Esophagus muscularis mucosa (tissue), 4 donors: ENCODE measurements at regions of chr22 and their contacts with region 1.

Region 1: DNA sequence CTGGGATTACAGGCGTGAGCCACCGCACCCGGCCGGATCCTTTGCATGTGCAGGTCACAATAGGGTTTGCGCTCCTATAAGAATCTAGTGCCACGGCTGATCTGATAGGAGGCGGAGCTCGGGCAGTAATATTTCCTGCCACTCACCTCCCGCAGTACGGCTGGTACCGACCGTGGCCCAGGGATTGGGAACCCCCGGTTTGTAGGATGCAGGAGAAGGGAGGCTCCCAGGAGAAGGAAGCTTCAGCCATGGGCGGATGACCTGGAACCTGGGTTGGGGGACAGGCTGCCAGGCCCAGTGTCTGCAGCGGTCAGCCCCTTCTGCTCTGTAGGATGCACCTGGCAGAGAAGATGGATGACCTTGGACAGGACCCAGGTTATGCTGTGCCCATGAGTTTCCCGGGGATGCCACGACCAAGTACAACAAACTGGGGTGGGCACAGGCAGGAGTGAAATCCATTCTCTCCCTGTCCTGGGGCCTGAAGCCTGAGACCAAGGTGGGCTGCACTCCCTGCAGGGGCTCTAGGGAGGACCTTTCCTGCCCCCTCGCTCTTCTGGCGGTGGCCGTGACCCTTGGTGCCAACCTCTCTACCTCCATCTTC is 818.9 kb downstream of the BRD1 start:
- DNase-seq: peak; percentile 89
- H3K4me3 ChIP-seq: no peak overlapping the region
- H3K27ac ChIP-seq: no peak overlapping the region
- H3K4me1 ChIP-seq: peaks cover 0 to 10% (median 3%) of the 10 kb centered on the region in 4 donors
- H3K27me3 ChIP-seq: peaks cover 0 to 48% (median 0%) of the 10 kb centered on the region in 4 donors
- CTCF ChIP-seq: no peak
- EP300 ChIP-seq: no peak
- POLR2A ChIP-seq: no peak

Region 2: GRCh38 chr22:48423479-48423911 is 585.3 kb before region 1 on chr22:
- intact Hi-C with region 1: no loop called
- DNase-seq: no peak
- H3K4me3 ChIP-seq: no peak overlapping the region
- H3K27ac ChIP-seq: no peak overlapping the region
- H3K4me1 ChIP-seq: no peaks in the 10 kb centered on the region
- H3K27me3 ChIP-seq: peaks cover 0 to 52% (median 0%) of the 10 kb centered on the region in 4 donors
- CTCF ChIP-seq: no peak
- EP300 ChIP-seq: no peak
- POLR2A ChIP-seq: no peak

Region 3: DNA sequence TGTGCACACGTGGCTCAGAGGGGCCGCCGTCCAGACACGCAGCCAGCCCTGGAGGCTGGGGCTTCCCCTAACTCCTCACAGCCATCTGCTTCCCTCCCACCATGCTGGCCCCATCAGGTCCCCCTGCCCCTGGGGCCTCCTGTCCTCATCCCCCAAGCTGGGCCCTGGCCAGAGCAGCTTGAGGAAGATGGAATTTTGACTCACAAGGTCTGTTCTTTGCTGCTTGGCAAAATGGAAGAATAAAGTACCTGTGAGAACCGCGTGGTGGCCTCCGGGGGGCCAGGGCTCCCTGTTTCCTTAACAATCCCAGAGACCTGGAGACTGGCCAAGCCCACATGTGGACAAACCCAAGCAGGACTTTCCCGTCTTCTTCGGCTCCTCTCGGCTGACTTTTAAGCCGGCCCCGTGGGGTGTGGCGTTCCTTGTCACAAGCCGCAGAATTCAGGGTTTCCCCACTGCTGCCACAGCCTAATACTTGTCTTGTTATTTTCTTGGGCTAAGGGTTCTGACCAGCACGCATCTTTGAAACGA is 53.9 kb before region 1 on chr22:
- intact Hi-C with region 1: loop called (anchors 10 kb)
- DNase-seq: peak; percentile 79
- H3K4me3 ChIP-seq: no peak overlapping the region
- H3K27ac ChIP-seq: no peak overlapping the region
- H3K4me1 ChIP-seq: no peaks in the 10 kb centered on the region
- H3K27me3 ChIP-seq: peaks cover 0 to 56% (median 0%) of the 10 kb centered on the region in 4 donors
- CTCF ChIP-seq: no peak
- EP300 ChIP-seq: no peak
- POLR2A ChIP-seq: no peak

Region 4: DNA sequence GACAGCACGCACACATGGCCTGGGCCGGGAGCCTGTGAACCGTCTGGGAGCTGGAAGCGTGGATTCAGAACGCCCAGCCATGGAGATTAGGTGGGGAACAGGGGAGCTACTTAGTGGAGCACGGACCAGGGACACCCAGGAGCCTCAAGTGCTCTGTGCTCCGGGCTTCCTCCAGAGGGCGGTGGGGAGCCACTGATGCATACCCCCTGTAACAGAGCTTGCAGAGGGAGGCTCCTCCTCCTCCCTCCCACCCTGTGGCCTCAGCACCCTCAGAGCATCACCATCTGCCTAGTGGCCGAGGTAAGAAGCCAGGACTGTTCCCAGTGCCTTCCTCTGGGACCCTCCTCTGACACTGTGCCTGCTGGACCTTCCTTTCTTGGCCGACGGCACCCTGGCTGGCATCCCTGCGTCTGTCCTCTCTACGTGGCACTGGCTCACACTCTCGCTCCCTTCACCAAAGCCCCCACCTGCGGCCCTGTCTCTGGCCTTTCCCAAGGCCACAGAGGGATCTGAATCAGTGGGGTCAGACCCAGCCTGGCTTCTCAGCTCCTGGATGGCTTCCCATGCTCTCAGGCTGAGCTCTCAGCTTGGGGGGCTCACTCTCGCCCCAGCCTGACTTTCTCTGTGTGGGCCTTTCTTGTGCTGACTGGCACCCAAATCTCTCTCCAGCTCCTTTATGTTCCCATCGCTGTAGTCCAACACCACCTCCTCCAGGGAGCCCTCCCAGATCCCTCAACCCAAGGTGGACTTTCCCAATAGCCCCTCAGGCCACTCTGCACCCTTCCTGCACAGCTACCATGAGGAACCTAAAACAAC is 38.0 kb after region 1 on chr22:
- intact Hi-C with region 1: no loop called
- DNase-seq: no peak
- H3K4me3 ChIP-seq: no peak overlapping the region
- H3K27ac ChIP-seq: no peak overlapping the region
- H3K4me1 ChIP-seq: peaks cover 0 to 3% (median 0%) of the 10 kb centered on the region in 4 donors
- H3K27me3 ChIP-seq: peaks cover 0 to 59% (median 0%) of the 10 kb centered on the region in 4 donors
- CTCF ChIP-seq: peak in 2 of 3 experiments; percentile 13 to 21
- EP300 ChIP-seq: no peak
- POLR2A ChIP-seq: no peak

Region 5: DNA sequence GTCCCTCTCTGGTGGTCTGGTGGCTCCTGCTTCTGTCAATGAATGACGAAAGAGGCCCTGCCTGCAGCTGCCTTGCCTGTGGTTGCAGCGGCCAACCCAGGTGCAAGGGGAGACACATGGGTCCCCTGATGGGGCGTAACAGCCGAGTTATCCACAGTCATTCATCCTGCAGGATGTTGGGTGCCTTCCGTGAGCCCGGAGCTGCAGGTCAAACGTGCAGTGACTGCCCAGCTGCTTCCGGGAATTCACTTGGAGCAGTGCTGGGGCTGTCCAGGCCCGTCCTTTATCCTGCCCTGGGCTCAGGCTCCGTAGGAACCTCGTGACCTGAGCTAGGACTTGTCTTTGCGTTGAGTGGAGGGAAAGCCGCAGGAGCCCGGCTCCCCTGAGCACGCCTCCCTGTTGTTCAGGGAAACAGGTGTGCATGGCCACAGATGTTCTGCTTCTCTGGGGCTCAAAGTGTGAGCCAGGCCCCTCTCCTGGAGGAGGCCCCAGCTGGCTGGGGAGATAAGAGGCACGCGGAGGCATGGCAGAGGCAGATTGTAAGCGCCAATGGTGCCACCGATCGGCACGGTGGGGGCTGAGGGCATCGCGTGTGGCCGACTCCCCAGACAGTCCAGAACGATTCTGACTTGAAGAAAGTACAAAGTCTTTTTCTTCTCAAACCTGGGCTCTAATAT is 183.5 kb after region 1 on chr22:
- intact Hi-C with region 1: no loop called
- DNase-seq: no peak
- H3K4me3 ChIP-seq: no peak overlapping the region
- H3K27ac ChIP-seq: no peak overlapping the region
- H3K4me1 ChIP-seq: peaks cover under 1 to 4% (median 3%) of the 10 kb centered on the region in 4 donors
- H3K27me3 ChIP-seq: peaks cover 0 to 60% (median 0%) of the 10 kb centered on the region in 4 donors
- CTCF ChIP-seq: no peak
- EP300 ChIP-seq: no peak
- POLR2A ChIP-seq: no peak